ENCODE measurements at regions of chr1 and their contacts with region 1.

Region 1: GRCh38 chr1:68673766-68674165 is 176.9 kb upstream of the DEPDC1 start:
- DNase-seq: no peak
- ATAC-seq: no peak
- H3K4me3 ChIP-seq: no peak overlapping the region
- H3K27ac ChIP-seq: no peak overlapping the region
- H3K4me1 ChIP-seq: no peaks in the 10 kb centered on the region
- H3K27me3 ChIP-seq: no peaks in the 10 kb centered on the region
- CTCF ChIP-seq: no peak
- POLR2A ChIP-seq: no peak

Region 2: DNA sequence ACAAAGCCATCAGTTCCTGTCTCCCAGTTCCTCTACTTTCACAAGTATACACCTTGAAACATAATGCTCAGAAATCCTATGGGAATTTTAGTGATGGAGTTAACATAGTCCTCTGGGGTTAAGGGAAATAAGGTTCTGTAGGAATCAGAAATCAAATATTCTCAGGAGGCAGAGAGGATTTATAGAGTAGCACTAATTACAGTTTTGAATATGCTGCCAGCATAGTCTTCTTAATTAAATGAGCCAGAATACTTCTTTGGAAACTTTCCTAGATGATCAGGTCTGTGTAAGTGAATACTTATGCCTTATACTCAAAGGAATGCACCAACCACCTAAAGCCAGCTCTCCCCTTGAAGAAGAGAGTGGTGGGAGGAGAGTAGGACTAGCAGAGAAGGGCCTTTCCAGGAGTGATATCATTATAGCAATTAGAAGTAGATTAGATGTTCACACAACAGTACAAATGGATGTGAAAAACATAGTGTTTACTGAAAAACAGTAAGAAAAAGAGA is 591.9 kb before region 1 on chr1:
- intact Hi-C with region 1: loop called in 1 of 10 experiments (anchors 5 kb)
- DNase-seq: no peak
- ATAC-seq: no peak
- H3K4me3 ChIP-seq: no peak overlapping the region
- H3K27ac ChIP-seq: no peak overlapping the region
- H3K4me1 ChIP-seq: no peaks in the 10 kb centered on the region
- H3K27me3 ChIP-seq: no peaks in the 10 kb centered on the region
- CTCF ChIP-seq: no peak
- POLR2A ChIP-seq: no peak

Measured in heart left ventricle (tissue), 16 donors.